Activated CD4-positive, alpha-beta T cell treated with anti-CD3 and anti-CD28 coated beads, Interleukin-2, amount 10 ng/mL, durations not matched to agents 24 days and 14 days (primary cell): ENCODE measurements at regions of chr2 and their contacts with region 1.

Region 1: GRCh38 chr2:148524519-148524919 is 120.0 kb upstream of the EPC2 start:
- DNase-seq: peak; percentile 89
- H3K4me3 Mint-ChIP-seq: peak overlapping the region; percentile 44
- H3K27ac Mint-ChIP-seq: peak overlapping the region; percentile 94
- H3K4me1 Mint-ChIP-seq: peaks cover 67% of the 10 kb centered on the region
- H3K27me3 Mint-ChIP-seq: no peaks in the 10 kb centered on the region

Region 2: GRCh38 chr2:147636238-147636882 is 888.2 kb before region 1 on chr2:
- intact Hi-C with region 1: loop called (anchors 10 kb)
- DNase-seq: no peak
- H3K4me3 Mint-ChIP-seq: no peak overlapping the region
- H3K27ac Mint-ChIP-seq: peak overlapping the region; percentile 88
- H3K4me1 Mint-ChIP-seq: peaks cover 14% of the 10 kb centered on the region
- H3K27me3 Mint-ChIP-seq: no peaks in the 10 kb centered on the region

Region 3: GRCh38 chr2:148020111-148021058 is 504.1 kb before region 1 on chr2 and contains the start of gene ORC4:
- intact Hi-C with region 1: loop called (anchors 1 kb)
- DNase-seq: peak; percentile 98
- H3K4me3 Mint-ChIP-seq: peak within 1 kb of the TSS; percentile 94
- H3K27ac Mint-ChIP-seq: peak within 1 kb of the TSS; percentile 93
- H3K4me1 Mint-ChIP-seq: peaks cover 45% of the 10 kb centered on the region
- H3K27me3 Mint-ChIP-seq: no peaks in the 10 kb centered on the region
- total RNA-seq, gene ORC4: 27.0 and 36.2 TPM in 2 replicates

Region 4: DNA sequence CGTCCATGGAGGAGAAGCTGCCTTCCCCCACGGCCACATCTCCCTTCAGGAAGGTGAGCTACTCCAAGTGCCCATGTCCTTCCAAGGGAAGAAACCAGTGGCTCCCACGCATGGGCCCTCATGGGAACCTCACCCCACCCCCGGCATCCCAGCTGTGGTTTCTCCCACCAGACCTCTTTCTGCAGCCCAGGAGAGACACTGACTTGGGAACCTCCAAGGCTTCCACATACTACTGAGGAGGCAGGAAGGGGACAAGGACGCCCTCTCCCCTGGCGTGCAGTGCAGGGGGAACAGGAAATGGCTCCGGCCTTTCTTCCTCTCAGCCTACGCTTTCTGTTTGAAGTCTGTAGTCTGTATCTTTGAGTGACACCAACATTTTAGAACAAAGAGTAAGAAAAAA is 15.5 kb after region 1 on chr2:
- intact Hi-C with region 1: loop called (anchors 1 kb)
- DNase-seq: peak; percentile 83
- H3K4me3 Mint-ChIP-seq: peak overlapping the region; percentile 55
- H3K27ac Mint-ChIP-seq: peak overlapping the region; percentile 82
- H3K4me1 Mint-ChIP-seq: peaks cover 52% of the 10 kb centered on the region
- H3K27me3 Mint-ChIP-seq: no peaks in the 10 kb centered on the region

Region 5: GRCh38 chr2:148603562-148603920 is 79.0 kb after region 1 on chr2:
- intact Hi-C with region 1: loop called (anchors 1 kb)
- DNase-seq: peak; percentile 77
- H3K4me3 Mint-ChIP-seq: no peak overlapping the region
- H3K27ac Mint-ChIP-seq: peak overlapping the region; percentile 93
- H3K4me1 Mint-ChIP-seq: peaks cover 18% of the 10 kb centered on the region
- H3K27me3 Mint-ChIP-seq: peaks cover 8% of the 10 kb centered on the region

Region 6: GRCh38 chr2:148874868-148875341 is 350.4 kb after region 1 on chr2 and contains the start of gene KIF5C:
- intact Hi-C with region 1: loop called (anchors 5 kb)
- DNase-seq: peak; percentile 94
- H3K4me3 Mint-ChIP-seq: peak within 1 kb of the TSS; percentile 91
- H3K27ac Mint-ChIP-seq: peak within 1 kb of the TSS; percentile 86
- H3K4me1 Mint-ChIP-seq: peaks cover 14% of the 10 kb centered on the region
- H3K27me3 Mint-ChIP-seq: peaks cover 26% of the 10 kb centered on the region
- total RNA-seq, gene KIF5C: 16.9 and 20.0 TPM in 2 replicates

Region 7: GRCh38 chr2:149320362-149320761 is 795.8 kb after region 1 on chr2:
- intact Hi-C with region 1: no loop called
- DNase-seq: no peak
- H3K4me3 Mint-ChIP-seq: no peak overlapping the region
- H3K27ac Mint-ChIP-seq: no peak overlapping the region
- H3K4me1 Mint-ChIP-seq: no peaks in the 10 kb centered on the region
- H3K27me3 Mint-ChIP-seq: no peaks in the 10 kb centered on the region